ENCODE measurements at regions of chr1 and their contacts with region 1.

Region 1: DNA sequence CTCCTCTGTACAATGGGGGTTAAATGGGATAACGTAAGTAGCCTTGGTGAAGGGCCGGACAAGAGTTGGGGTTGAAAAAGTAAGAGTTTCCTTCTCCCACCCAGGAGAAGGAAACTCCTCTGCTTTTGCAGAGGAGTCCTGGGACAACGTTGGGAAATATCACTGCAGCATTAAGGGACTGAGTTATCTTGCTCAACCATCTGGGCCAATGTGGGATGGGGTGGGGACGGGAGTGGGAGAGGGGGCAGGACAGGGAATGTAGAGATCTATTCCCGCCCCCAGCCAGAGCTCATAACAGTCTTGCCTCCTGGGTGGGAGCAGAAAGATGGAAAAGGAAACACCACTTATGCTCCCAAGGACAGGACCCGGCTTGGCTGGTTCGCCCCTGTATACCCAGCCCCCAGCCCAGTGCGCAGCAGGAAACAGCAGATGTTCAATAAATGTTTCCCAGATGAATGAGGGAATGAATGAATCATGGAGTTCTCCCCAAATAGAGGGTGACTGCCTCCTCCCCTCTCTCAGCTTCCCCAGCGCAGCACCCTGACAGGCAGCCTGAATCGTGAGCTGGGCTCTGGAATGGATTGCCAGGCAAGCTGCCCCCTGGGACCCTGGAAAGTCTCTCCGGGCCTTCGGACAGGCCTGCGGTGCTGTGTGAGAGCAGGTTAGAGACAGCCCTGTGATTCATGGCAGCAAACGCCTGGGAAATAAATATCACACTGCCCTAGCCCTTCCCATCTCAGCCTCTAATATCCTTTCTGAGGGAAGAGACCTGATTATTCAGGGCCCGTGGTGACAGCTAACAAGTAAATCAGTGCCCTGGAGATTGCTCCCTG is 24.8 kb downstream of the FBXO2 start:
- DNase-seq: no peak
- H3K4me3 ChIP-seq: no peak overlapping the region
- H3K27ac ChIP-seq: no peak overlapping the region
- H3K4me1 ChIP-seq: no peaks in the 10 kb centered on the region
- H3K27me3 ChIP-seq: no peaks in the 10 kb centered on the region
- CTCF ChIP-seq: no peak

Region 2: GRCh38 chr1:11045428-11046269 is 583.8 kb before region 1 on chr1:
- CTCF ChIA-PET with region 1: no interaction called
- dilution Hi-C with region 1: no loop called
- in situ Hi-C with region 1: loop called (anchors 10 to 25 kb)
- intact Hi-C with region 1: no loop called
- DNase-seq: no peak
- H3K4me3 ChIP-seq: no peak overlapping the region
- H3K27ac ChIP-seq: no peak overlapping the region
- H3K4me1 ChIP-seq: no peaks in the 10 kb centered on the region
- H3K27me3 ChIP-seq: no peaks in the 10 kb centered on the region
- CTCF ChIP-seq: no peak

Region 3: DNA sequence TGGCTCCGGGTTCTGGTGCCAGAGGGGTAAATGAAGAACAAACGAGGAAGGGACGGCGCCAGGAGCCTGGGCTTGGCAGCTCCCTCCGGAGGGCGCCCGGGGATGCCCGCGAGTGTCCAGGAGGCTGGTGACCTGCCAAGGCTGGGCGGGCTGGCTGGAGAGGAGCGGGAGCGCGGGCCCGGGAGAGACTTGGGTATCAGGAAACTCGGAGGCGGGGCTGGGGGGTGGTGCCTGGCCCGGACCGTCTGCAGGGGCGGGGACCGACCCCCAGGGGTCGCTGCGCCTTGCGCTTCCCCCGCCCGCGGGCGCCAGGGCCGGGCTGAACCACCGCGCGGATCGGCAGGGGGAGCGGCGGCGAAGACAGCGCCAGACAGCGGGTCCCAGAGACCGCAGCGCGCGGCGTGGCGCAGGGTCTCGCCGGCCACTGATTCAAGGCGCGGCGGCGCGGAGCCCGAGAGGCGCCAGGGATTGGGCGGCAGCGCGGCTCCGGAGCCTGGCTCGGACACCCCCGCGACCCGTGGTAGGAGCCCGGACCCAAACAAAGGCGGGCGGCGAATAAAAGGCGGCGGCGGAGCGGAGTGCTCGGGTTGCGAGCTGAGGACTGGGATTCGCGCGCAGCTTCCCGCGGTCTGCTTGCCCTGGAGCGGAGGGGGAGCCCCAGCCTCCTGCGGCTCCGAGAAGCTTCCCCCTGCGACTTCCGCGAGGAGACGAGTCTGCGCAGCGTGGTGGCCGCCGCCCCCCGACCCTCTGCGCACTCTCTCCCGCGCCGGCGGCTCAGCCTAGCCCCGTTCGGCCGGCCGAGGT is 150.6 kb before region 1 on chr1 and contains the start of gene DISP3:
- CTCF ChIA-PET with region 1: no interaction called
- dilution Hi-C with region 1: no loop called
- in situ Hi-C with region 1: loop called in 1 of 2 experiments (anchors 10 kb)
- intact Hi-C with region 1: no loop called
- DNase-seq: peak; percentile 63
- H3K4me3 ChIP-seq: peak within 1 kb of the TSS; percentile 48 to 60 (median 54)
- H3K27ac ChIP-seq: no peak within 1 kb of the TSS
- H3K4me1 ChIP-seq: peaks cover 6% of the 10 kb centered on the region
- H3K27me3 ChIP-seq: peaks cover 10% of the 10 kb centered on the region
- CTCF ChIP-seq: peak; percentile 43 to 56
- total RNA-seq, gene DISP3: under 0.01 to 0.14 TPM

Region 4: GRCh38 chr1:11617310-11617709 is 12.1 kb before region 1 on chr1:
- CTCF ChIA-PET with region 1: no interaction called
- dilution Hi-C with region 1: no loop called
- in situ Hi-C with region 1: no loop called
- intact Hi-C with region 1: no loop called
- DNase-seq: no peak
- H3K4me3 ChIP-seq: no peak overlapping the region
- H3K27ac ChIP-seq: no peak overlapping the region
- H3K4me1 ChIP-seq: no peaks in the 10 kb centered on the region
- H3K27me3 ChIP-seq: no peaks in the 10 kb centered on the region
- CTCF ChIP-seq: peak in 1 of 2 donors; percentile 11

Region 5: GRCh38 chr1:11681071-11681771 is 51.8 kb after region 1 on chr1 and contains the start of gene MAD2L2:
- CTCF ChIA-PET with region 1: no interaction called
- dilution Hi-C with region 1: loop called (anchors 5 kb)
- in situ Hi-C with region 1: no loop called
- intact Hi-C with region 1: no loop called
- DNase-seq: peak; percentile 79
- H3K4me3 ChIP-seq: peak within 1 kb of the TSS; percentile 87 to 99 (median 89)
- H3K27ac ChIP-seq: peak within 1 kb of the TSS; percentile 35
- H3K4me1 ChIP-seq: peaks cover 11% of the 10 kb centered on the region
- H3K27me3 ChIP-seq: no peaks in the 10 kb centered on the region
- CTCF ChIP-seq: no peak
- total RNA-seq, gene MAD2L2: 44.5 to 45.9 TPM